ENCODE measurements at regions of chr4 and their contacts with region 1.

Region 1: GRCh38 chr4:87502580-87503238 is 26.5 kb downstream of the SPARCL1 start:
- DNase-seq: no peak
- H3K4me3 ChIP-seq: no peak overlapping the region
- H3K27ac ChIP-seq: no peak overlapping the region
- H3K4me1 ChIP-seq: no peaks in the 10 kb centered on the region
- H3K27me3 ChIP-seq: no peaks in the 10 kb centered on the region
- CTCF ChIP-seq: no peak

Region 2: DNA sequence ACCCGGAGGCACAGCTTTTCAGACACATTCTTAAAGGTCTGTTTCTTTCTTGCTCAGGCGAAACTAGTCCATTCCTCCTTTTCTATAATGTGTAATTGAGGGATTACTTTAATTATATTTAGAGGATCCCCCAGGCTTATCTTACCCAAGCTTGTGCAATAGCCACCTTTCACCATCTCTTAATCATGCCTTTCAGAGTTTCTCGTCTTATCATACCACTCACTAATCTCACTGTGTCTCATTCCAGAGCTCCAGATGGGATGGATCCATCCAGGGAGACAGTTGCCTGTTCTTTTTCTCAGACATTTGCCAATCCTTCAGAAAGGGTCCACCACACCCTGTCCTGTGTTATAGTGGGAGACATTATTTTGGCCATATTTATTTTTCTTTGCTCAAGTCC is 14.0 kb after region 1 on chr4:
- intact Hi-C with region 1: loop called (anchors 2 kb)
- DNase-seq: no peak
- H3K4me3 ChIP-seq: no peak overlapping the region
- H3K27ac ChIP-seq: no peak overlapping the region
- H3K4me1 ChIP-seq: no peaks in the 10 kb centered on the region
- H3K27me3 ChIP-seq: no peaks in the 10 kb centered on the region
- CTCF ChIP-seq: no peak

Measured in colonic mucosa (tissue), 4 donors.